ENCODE measurements at regions of chr2 and their contacts with region 1.

Region 1: GRCh38 chr2:147479363-147479762 is 365.5 kb upstream of the ACVR2A start:
- DNase-seq: no peak
- H3K4me3 ChIP-seq: no peak overlapping the region
- H3K27ac ChIP-seq: no peak overlapping the region
- H3K4me1 ChIP-seq: no peaks in the 10 kb centered on the region
- H3K27me3 ChIP-seq: no peaks in the 10 kb centered on the region
- CTCF ChIP-seq: no peak
- POLR2A ChIP-seq: no peak

Region 2: DNA sequence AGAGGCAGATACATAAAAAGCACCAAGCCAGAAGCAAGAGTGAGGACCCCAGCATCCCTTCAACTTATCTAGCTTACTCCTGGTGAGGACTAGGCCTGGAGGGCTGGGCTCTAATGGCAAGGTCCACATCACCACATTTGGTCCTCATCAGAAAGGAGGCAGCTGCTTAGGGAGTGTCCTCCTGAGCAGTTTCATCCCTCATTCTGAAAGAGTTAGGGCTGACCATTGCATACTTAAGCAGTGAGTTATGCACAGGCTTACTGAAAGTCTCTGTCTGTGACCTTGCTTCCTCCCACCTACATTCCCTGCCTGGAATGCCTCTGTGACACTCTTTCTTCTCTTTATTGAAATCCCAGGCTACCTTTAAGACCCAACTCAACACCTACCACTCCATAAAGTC is 63.7 kb after region 1 on chr2:
- intact Hi-C with region 1: loop called (anchors 10 kb)
- DNase-seq: no peak
- H3K4me3 ChIP-seq: no peak overlapping the region
- H3K27ac ChIP-seq: no peak overlapping the region
- H3K4me1 ChIP-seq: no peaks in the 10 kb centered on the region
- H3K27me3 ChIP-seq: no peaks in the 10 kb centered on the region
- CTCF ChIP-seq: no peak
- POLR2A ChIP-seq: no peak

Measured in esophagus squamous epithelium (tissue), 5 donors.